Caco-2 (cell line): ENCODE measurements at regions of chr7 and their contacts with region 1.

Region 1: GRCh38 chr7:41977151-41977651 is 259.8 kb downstream of the GLI3 start:
- DNase-seq: peak in 1 of 2 experiments; percentile 25
- H3K4me3 ChIP-seq: no peak overlapping the region
- H3K4me3 Mint-ChIP-seq: no peak overlapping the region
- H3K27ac Mint-ChIP-seq: no peak overlapping the region
- H3K4me1 ChIP-seq: no peaks in the 10 kb centered on the region
- H3K4me1 Mint-ChIP-seq: no peaks in the 10 kb centered on the region
- H3K27me3 ChIP-seq: peaks cover 1% of the 10 kb centered on the region; the same call in 1 of the 2 replicates
- H3K27me3 Mint-ChIP-seq: peaks cover 19% of the 10 kb centered on the region
- CTCF ChIP-seq: peak; percentile 74 to 78

Region 2: GRCh38 chr7:42014625-42015546 is 37.7 kb after region 1 on chr7:
- CTCF ChIA-PET with region 1: no interaction called
- POLR2A ChIA-PET with region 1: no interaction called
- intact Hi-C with region 1: no loop called
- DNase-seq: peak; percentile 40 to 43
- H3K4me3 ChIP-seq: no peak overlapping the region
- H3K4me3 Mint-ChIP-seq: no peak overlapping the region
- H3K27ac Mint-ChIP-seq: no peak overlapping the region
- H3K4me1 ChIP-seq: no peaks in the 10 kb centered on the region
- H3K4me1 Mint-ChIP-seq: no peaks in the 10 kb centered on the region
- H3K27me3 ChIP-seq: no peaks in the 10 kb centered on the region
- H3K27me3 Mint-ChIP-seq: peaks cover 19% of the 10 kb centered on the region
- CTCF ChIP-seq: peak; percentile 56 to 79

Region 3: DNA sequence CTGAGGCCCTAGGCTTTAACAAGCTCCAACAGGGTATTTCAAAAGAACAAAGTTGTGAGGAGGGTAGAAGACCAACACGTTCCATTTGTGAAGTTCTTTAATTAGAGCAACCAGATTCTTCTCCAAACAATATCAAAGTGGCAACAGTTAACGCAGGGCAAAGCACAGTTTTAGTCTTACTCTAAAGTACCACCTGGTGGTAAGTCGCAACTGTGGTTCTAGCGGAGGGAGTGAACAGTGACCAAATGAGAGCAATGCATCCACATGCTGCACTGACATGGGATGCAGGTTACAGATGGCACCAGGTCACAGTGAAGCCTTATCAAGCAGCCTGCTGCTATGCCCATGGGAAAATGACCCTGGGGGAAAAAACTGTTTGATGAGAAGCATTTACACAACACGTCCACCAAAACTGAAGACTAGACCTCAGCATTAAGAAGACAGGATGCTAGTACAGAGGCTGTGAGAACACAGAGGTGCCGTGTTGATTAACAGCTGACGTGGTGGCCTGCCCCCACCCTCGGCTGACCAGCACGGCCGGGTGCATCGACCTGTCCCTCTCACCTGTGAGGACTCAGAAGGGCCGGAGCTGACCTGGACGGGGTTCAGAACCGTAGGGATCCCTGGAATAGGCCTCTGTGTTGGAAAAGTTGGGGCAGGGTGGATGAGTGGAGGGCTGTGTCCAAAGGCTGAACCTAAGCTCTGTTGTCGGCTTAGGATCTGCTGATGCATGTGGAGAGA is 48.6 kb after region 1 on chr7:
- CTCF ChIA-PET with region 1: no interaction called
- POLR2A ChIA-PET with region 1: no interaction called
- intact Hi-C with region 1: loop called (anchors 5 kb)
- DNase-seq: no peak
- H3K4me3 ChIP-seq: no peak overlapping the region
- H3K4me3 Mint-ChIP-seq: no peak overlapping the region
- H3K27ac Mint-ChIP-seq: no peak overlapping the region
- H3K4me1 ChIP-seq: no peaks in the 10 kb centered on the region
- H3K4me1 Mint-ChIP-seq: no peaks in the 10 kb centered on the region
- H3K27me3 ChIP-seq: no peaks in the 10 kb centered on the region; the same call in 1 of the 2 replicates
- H3K27me3 Mint-ChIP-seq: peaks cover 18% of the 10 kb centered on the region
- CTCF ChIP-seq: no peak

Region 4: GRCh38 chr7:42143711-42144600 is 166.8 kb after region 1 on chr7:
- CTCF ChIA-PET with region 1: no interaction called
- POLR2A ChIA-PET with region 1: no interaction called
- intact Hi-C with region 1: loop called (anchors 10 kb)
- DNase-seq: no peak
- H3K4me3 ChIP-seq: no peak overlapping the region
- H3K4me3 Mint-ChIP-seq: no peak overlapping the region
- H3K27ac Mint-ChIP-seq: no peak overlapping the region
- H3K4me1 ChIP-seq: no peaks in the 10 kb centered on the region
- H3K4me1 Mint-ChIP-seq: no peaks in the 10 kb centered on the region
- H3K27me3 ChIP-seq: no peaks in the 10 kb centered on the region; the same call in 1 of the 2 replicates
- H3K27me3 Mint-ChIP-seq: peaks cover 37% of the 10 kb centered on the region
- CTCF ChIP-seq: no peak

Region 5: GRCh38 chr7:42690794-42691639 is 713.8 kb after region 1 on chr7:
- CTCF ChIA-PET with region 1: no interaction called
- POLR2A ChIA-PET with region 1: no interaction called
- intact Hi-C with region 1: loop called (anchors 1 kb)
- DNase-seq: peak; percentile 30 to 42
- H3K4me3 ChIP-seq: no peak overlapping the region
- H3K4me3 Mint-ChIP-seq: no peak overlapping the region
- H3K27ac Mint-ChIP-seq: no peak overlapping the region
- H3K4me1 ChIP-seq: no peaks in the 10 kb centered on the region
- H3K4me1 Mint-ChIP-seq: no peaks in the 10 kb centered on the region
- H3K27me3 ChIP-seq: peaks cover 1% of the 10 kb centered on the region; the same call in 1 of the 2 replicates
- H3K27me3 Mint-ChIP-seq: peaks cover 5% of the 10 kb centered on the region
- CTCF ChIP-seq: peak; percentile 31 to 62

Region 6: GRCh38 chr7:42831718-42832431 is 854.7 kb after region 1 on chr7:
- CTCF ChIA-PET with region 1: no interaction called
- POLR2A ChIA-PET with region 1: no interaction called
- intact Hi-C with region 1: loop called (anchors 5 kb)
- DNase-seq: peak; percentile 34 to 41
- H3K4me3 ChIP-seq: no peak overlapping the region
- H3K4me3 Mint-ChIP-seq: no peak overlapping the region
- H3K27ac Mint-ChIP-seq: no peak overlapping the region
- H3K4me1 ChIP-seq: no peaks in the 10 kb centered on the region
- H3K4me1 Mint-ChIP-seq: no peaks in the 10 kb centered on the region
- H3K27me3 ChIP-seq: no peaks in the 10 kb centered on the region
- H3K27me3 Mint-ChIP-seq: peaks cover 19% of the 10 kb centered on the region
- CTCF ChIP-seq: peak; percentile 38 to 79